ENCODE measurements at regions of chr13 and their contacts with region 1.

Region 1: GRCh38 chr13:32669030-32669646 is 82.9 kb downstream of the PDS5B start:
- DNase-seq: peak in 7 of 9 donors; percentile 11 to 57 (median 37)
- ATAC-seq: peak; percentile 72
- H3K4me3 ChIP-seq: no peak overlapping the region
- H3K4me3 Mint-ChIP-seq: no peak overlapping the region
- H3K27ac ChIP-seq: no peak overlapping the region
- H3K27ac Mint-ChIP-seq: peak overlapping the region in 2 of 9 donors; percentile 2 to 14
- H3K4me1 ChIP-seq: no peaks in the 10 kb centered on the region
- H3K4me1 Mint-ChIP-seq: peaks cover 2 to 31% (median 11%) of the 10 kb centered on the region in 7 donors
- H3K27me3 ChIP-seq: no peaks in the 10 kb centered on the region
- H3K27me3 Mint-ChIP-seq: no peaks in the 10 kb centered on the region

Region 2: GRCh38 chr13:32650705-32651311 is 18.3 kb before region 1 on chr13:
- CTCF ChIA-PET with region 1: interaction called, 6 read pairs
- POLR2A ChIA-PET with region 1: interaction called, 3 read pairs
- intact Hi-C with region 1: loop called in 1 of 2 experiments (anchors 1 kb)
- DNase-seq: peak in 8 of 9 donors; percentile 16 to 55 (median 41)
- ATAC-seq: peak; percentile 91
- H3K4me3 ChIP-seq: no peak overlapping the region
- H3K4me3 Mint-ChIP-seq: no peak overlapping the region
- H3K27ac ChIP-seq: no peak overlapping the region
- H3K27ac Mint-ChIP-seq: peak overlapping the region in 1 of 9 donors; percentile 21
- H3K4me1 ChIP-seq: peaks cover 0 to 10% of the 10 kb centered on the region in 2 donors
- H3K4me1 Mint-ChIP-seq: peaks cover 23 to 55% (median 40%) of the 10 kb centered on the region in 7 donors
- H3K27me3 ChIP-seq: no peaks in the 10 kb centered on the region
- H3K27me3 Mint-ChIP-seq: no peaks in the 10 kb centered on the region

Region 3: DNA sequence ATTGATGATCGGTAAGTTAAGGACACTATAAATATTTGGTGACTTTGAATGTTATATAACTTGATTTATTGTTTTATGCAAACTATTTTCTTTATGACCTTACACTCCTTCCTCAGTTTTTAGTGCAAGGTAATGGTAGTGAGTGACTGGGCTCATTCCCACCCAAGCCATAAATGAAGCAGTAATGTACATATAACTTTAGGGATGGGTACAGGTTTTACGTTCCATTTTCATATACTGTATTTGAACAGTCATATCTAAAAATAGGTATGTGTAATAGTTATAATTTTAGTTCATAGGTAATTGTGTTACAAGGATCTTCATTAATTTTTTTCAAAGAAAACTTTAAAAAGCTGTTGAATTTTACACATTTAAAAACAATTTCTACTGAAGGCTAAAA is 18.1 kb after region 1 on chr13:
- CTCF ChIA-PET with region 1: interaction called, 7 read pairs
- POLR2A ChIA-PET with region 1: no interaction called
- intact Hi-C with region 1: loop called in 1 of 2 experiments (anchors 2 kb)
- DNase-seq: no peak
- ATAC-seq: no peak
- H3K4me3 ChIP-seq: no peak overlapping the region
- H3K4me3 Mint-ChIP-seq: no peak overlapping the region
- H3K27ac ChIP-seq: no peak overlapping the region
- H3K27ac Mint-ChIP-seq: no peak overlapping the region
- H3K4me1 ChIP-seq: no peaks in the 10 kb centered on the region
- H3K4me1 Mint-ChIP-seq: no peaks in the 10 kb centered on the region
- H3K27me3 ChIP-seq: no peaks in the 10 kb centered on the region
- H3K27me3 Mint-ChIP-seq: no peaks in the 10 kb centered on the region

Region 4: DNA sequence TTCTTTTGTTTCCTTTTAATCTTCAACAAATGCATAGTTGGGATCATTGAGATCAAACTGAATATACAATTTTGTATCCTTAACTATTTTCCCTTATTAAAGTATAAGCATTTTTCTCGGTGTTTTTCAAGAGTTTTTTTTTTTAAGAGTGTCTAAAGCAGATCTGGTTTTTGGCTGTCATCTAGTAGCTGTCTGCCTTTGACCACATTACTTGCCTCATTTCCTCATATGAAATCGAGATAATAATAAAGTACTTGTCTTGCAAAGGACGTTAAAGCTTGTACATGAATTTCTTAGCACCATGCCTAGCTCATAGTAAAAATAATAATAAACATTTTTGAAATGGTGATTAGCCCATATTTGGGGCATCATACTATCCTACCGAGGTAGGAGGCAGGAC is 38.3 kb after region 1 on chr13:
- CTCF ChIA-PET with region 1: no interaction called
- POLR2A ChIA-PET with region 1: no interaction called
- intact Hi-C with region 1: no loop called
- DNase-seq: no peak
- ATAC-seq: no peak
- H3K4me3 ChIP-seq: no peak overlapping the region
- H3K4me3 Mint-ChIP-seq: no peak overlapping the region
- H3K27ac ChIP-seq: no peak overlapping the region
- H3K27ac Mint-ChIP-seq: no peak overlapping the region
- H3K4me1 ChIP-seq: no peaks in the 10 kb centered on the region
- H3K4me1 Mint-ChIP-seq: peaks cover 0 to 11% (median 9%) of the 10 kb centered on the region in 7 donors
- H3K27me3 ChIP-seq: no peaks in the 10 kb centered on the region
- H3K27me3 Mint-ChIP-seq: no peaks in the 10 kb centered on the region

Region 5: GRCh38 chr13:32731074-32731473 is 61.9 kb after region 1 on chr13:
- CTCF ChIA-PET with region 1: no interaction called
- POLR2A ChIA-PET with region 1: no interaction called
- intact Hi-C with region 1: no loop called
- DNase-seq: no peak
- ATAC-seq: no peak
- H3K4me3 ChIP-seq: no peak overlapping the region
- H3K4me3 Mint-ChIP-seq: peak overlapping the region in 6 of 10 donors; percentile 2 to 57 (median 10)
- H3K27ac ChIP-seq: no peak overlapping the region
- H3K27ac Mint-ChIP-seq: peak overlapping the region in 8 of 9 donors; percentile 10 to 81 (median 44)
- H3K4me1 ChIP-seq: peaks cover 2 to 13% of the 10 kb centered on the region in 2 donors
- H3K4me1 Mint-ChIP-seq: peaks cover 31 to 84% (median 71%) of the 10 kb centered on the region in 7 donors
- H3K27me3 ChIP-seq: no peaks in the 10 kb centered on the region
- H3K27me3 Mint-ChIP-seq: no peaks in the 10 kb centered on the region